ENCODE measurements at regions of chr3 and their contacts with region 1.

Region 1: DNA sequence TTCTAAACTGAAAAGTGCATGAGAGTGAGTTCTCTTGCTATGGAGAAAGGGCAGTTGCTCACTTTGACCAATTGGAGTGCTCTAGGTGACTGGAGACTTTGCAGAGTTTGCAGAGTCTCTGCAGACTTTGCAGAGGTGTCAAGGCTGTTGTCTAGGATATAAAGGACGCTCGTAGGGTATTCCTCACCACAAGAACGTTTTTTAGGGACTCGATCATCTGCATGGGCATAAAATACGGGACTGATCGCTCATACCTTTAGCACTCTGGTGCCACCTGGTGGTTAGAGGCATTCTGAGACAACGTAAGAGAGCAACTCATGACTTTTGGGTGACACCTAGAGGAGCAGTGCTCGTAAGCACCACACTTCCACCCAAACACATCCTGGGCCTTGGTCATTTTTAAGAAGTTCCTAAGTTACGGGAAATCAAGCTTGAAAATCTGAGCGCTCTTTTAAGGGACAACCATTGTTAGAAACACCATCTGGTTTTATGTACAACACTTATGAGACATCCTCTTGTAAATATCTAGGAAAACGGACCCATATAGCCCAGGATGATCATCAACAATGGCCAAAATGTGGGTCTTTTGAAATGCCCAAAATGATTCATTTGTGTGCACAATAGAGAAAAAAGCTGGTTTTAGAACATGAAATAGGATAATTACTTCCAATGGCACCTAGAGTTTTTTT is 51.6 kb upstream of the XCR1 start:
- DNase-seq: peak; percentile 85 to 88 (median 86)
- H3K4me3 ChIP-seq: no peak overlapping the region
- H3K4me3 Mint-ChIP-seq: peak overlapping the region in 4 of 8 donors; percentile 3 to 70 (median 51)
- H3K27ac ChIP-seq: no peak overlapping the region
- H3K27ac Mint-ChIP-seq: peak overlapping the region in 2 of 7 donors; percentile 15 to 16
- H3K4me1 ChIP-seq: peaks cover 3% of the 10 kb centered on the region
- H3K4me1 Mint-ChIP-seq: peaks cover 6 to 9% (median 8%) of the 10 kb centered on the region in 4 donors
- H3K27me3 ChIP-seq: no peaks in the 10 kb centered on the region
- H3K27me3 Mint-ChIP-seq: no peaks in the 10 kb centered on the region

Region 2: GRCh38 chr3:45593708-45594609 is 484.9 kb before region 1 on chr3:
- CTCF ChIA-PET with region 1: no interaction called
- POLR2A ChIA-PET with region 1: no interaction called
- intact Hi-C with region 1: loop called (anchors 1 kb)
- DNase-seq: peak; percentile 61 to 78 (median 67)
- H3K4me3 ChIP-seq: peak overlapping the region; percentile 70 to 76
- H3K4me3 Mint-ChIP-seq: peak overlapping the region; percentile 89 to 99 (median 94)
- H3K27ac ChIP-seq: peak overlapping the region; percentile 58
- H3K27ac Mint-ChIP-seq: peak overlapping the region; percentile 81 to 98 (median 90)
- H3K4me1 ChIP-seq: peaks cover 59% of the 10 kb centered on the region
- H3K4me1 Mint-ChIP-seq: peaks cover 42 to 60% (median 52%) of the 10 kb centered on the region in 4 donors
- H3K27me3 ChIP-seq: no peaks in the 10 kb centered on the region
- H3K27me3 Mint-ChIP-seq: no peaks in the 10 kb centered on the region

Region 3: GRCh38 chr3:45760878-45761711 is 317.8 kb before region 1 on chr3:
- CTCF ChIA-PET with region 1: interaction called, 65 read pairs
- POLR2A ChIA-PET with region 1: no interaction called
- intact Hi-C with region 1: loop called (anchors 1 kb)
- DNase-seq: peak in 4 of 5 donors; percentile 30 to 43 (median 34)
- H3K4me3 ChIP-seq: no peak overlapping the region
- H3K4me3 Mint-ChIP-seq: no peak overlapping the region
- H3K27ac ChIP-seq: no peak overlapping the region
- H3K27ac Mint-ChIP-seq: peak overlapping the region in 1 of 7 donors; percentile 8
- H3K4me1 ChIP-seq: no peaks in the 10 kb centered on the region
- H3K4me1 Mint-ChIP-seq: peaks cover 0 to 4% (median 3%) of the 10 kb centered on the region in 4 donors
- H3K27me3 ChIP-seq: no peaks in the 10 kb centered on the region
- H3K27me3 Mint-ChIP-seq: peaks cover 0 to 4% of the 10 kb centered on the region in 2 donors

Region 4: GRCh38 chr3:45948311-45948781 is 130.5 kb before region 1 on chr3:
- CTCF ChIA-PET with region 1: interaction called, 677 read pairs
- POLR2A ChIA-PET with region 1: interaction called, 12 read pairs
- intact Hi-C with region 1: loop called (anchors 1 kb)
- DNase-seq: no peak
- H3K4me3 ChIP-seq: no peak overlapping the region
- H3K4me3 Mint-ChIP-seq: peak overlapping the region in 5 of 8 donors; percentile 17 to 65 (median 22)
- H3K27ac ChIP-seq: no peak overlapping the region
- H3K27ac Mint-ChIP-seq: peak overlapping the region; percentile 35 to 83 (median 79)
- H3K4me1 ChIP-seq: peaks cover 87% of the 10 kb centered on the region
- H3K4me1 Mint-ChIP-seq: peaks cover 42 to 97% (median 74%) of the 10 kb centered on the region in 4 donors
- H3K27me3 ChIP-seq: no peaks in the 10 kb centered on the region
- H3K27me3 Mint-ChIP-seq: no peaks in the 10 kb centered on the region

Region 5: DNA sequence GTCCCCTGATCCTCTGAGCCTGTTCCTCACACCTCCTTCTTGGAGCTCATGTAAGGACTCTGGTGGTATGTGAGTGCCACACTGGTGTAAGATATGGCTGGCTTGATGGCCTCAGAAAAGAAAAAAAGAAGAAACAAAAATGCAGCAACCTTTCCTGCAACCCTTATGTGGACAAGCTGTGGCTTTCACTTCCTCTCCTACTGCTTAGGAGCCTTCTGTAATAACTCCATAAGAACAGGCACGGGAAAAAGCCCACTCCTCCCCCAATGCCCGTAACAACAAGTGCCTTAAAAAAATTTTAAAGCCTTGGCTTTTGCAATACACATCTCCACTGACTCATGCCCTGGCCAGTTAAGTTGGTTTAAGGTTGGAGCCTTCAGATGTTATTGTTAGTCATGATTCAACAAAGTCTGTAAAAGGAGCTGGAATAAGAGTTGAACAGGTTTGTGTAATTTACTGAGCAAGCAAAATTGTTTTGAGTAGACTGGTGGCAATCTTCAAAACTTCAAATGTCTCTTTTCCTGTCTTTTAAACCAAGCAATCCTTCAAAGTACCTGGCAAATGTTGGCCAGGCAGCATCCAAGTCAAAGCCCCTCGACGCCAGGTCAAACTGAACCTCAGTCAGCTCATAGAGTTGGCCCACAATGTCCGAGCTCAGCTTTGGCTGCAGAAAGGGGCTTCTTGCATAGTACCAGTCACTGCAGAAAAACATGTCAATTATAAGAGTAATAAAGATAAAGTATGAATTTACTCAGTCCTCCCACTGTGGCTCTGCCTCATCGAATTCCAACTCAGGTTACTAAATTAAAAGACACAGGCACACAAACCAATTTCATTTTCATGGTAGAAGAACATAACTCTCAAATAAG is 106.1 kb before region 1 on chr3:
- CTCF ChIA-PET with region 1: interaction called, 153 read pairs
- POLR2A ChIA-PET with region 1: interaction called, 3 read pairs
- intact Hi-C with region 1: no loop called
- DNase-seq: no peak
- H3K4me3 ChIP-seq: no peak overlapping the region
- H3K4me3 Mint-ChIP-seq: peak overlapping the region in 4 of 8 donors; percentile 20 to 54 (median 28)
- H3K27ac ChIP-seq: no peak overlapping the region
- H3K27ac Mint-ChIP-seq: peak overlapping the region; percentile 63 to 90 (median 75)
- H3K4me1 ChIP-seq: peaks cover 75% of the 10 kb centered on the region
- H3K4me1 Mint-ChIP-seq: peaks cover 40 to 91% (median 66%) of the 10 kb centered on the region in 4 donors
- H3K27me3 ChIP-seq: no peaks in the 10 kb centered on the region
- H3K27me3 Mint-ChIP-seq: no peaks in the 10 kb centered on the region

Region 6: DNA sequence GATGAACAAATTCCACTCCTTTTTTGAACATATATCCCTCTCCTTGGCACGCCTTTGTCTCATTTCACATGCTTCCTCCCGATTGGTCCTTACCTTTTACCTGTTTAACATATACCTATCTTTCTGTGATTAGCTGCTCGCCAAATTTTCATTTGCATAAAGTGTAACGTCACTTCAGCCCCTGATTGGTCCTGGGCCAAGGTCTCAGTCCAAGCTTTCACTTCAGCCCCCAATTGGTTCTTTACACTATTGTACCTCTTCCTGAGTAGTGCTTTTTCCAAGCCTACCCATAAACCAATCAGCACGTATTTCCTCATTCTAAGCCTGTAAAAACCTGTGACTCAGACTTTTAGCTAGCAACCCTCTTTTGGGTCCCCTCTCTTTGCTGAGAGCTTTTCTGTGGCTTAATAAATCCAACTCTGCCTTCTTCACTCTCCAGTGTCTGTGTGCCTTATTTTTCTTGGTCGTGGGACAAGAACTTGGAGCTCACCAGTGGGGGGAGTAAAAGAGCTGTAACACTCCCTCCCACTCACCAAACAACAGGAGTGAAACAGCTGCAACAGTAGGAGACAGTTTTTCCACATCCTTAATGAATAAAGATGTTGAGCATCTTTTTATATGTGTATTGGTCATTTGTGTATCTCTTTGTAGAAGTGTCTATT is 51.0 kb before region 1 on chr3:
- CTCF ChIA-PET with region 1: interaction called, 11 read pairs
- POLR2A ChIA-PET with region 1: no interaction called
- intact Hi-C with region 1: no loop called
- DNase-seq: no peak
- H3K4me3 ChIP-seq: no peak overlapping the region
- H3K4me3 Mint-ChIP-seq: no peak overlapping the region
- H3K27ac ChIP-seq: no peak overlapping the region
- H3K27ac Mint-ChIP-seq: peak overlapping the region in 1 of 7 donors; percentile 86
- H3K4me1 ChIP-seq: no peaks in the 10 kb centered on the region
- H3K4me1 Mint-ChIP-seq: peaks cover 0 to 3% (median 0%) of the 10 kb centered on the region in 4 donors
- H3K27me3 ChIP-seq: no peaks in the 10 kb centered on the region
- H3K27me3 Mint-ChIP-seq: no peaks in the 10 kb centered on the region

Region 7: DNA sequence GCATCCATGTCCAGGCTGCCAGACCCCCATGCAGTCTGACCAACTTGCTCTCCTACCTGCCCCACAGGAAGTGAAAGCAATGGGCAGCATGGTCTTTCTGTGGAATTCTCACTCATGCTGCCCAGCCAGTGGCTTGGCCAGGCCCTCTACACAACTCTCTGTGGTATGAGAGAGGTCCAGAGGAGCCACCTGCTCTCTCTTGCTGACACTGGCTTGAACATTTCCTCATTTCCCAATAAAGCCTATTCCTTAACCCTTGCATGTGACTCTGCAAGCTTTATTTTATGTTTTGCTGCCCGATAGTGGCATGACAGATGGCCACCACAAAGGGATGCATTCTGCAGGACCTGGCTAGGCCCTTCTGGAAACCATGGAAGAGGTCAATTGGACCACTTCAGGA is 75.5 kb after region 1 on chr3:
- CTCF ChIA-PET with region 1: no interaction called
- POLR2A ChIA-PET with region 1: no interaction called
- intact Hi-C with region 1: no loop called
- DNase-seq: no peak
- H3K4me3 ChIP-seq: no peak overlapping the region
- H3K4me3 Mint-ChIP-seq: no peak overlapping the region
- H3K27ac ChIP-seq: no peak overlapping the region
- H3K27ac Mint-ChIP-seq: no peak overlapping the region
- H3K4me1 ChIP-seq: peaks cover 14% of the 10 kb centered on the region
- H3K4me1 Mint-ChIP-seq: peaks cover 5 to 14% (median 12%) of the 10 kb centered on the region in 4 donors
- H3K27me3 ChIP-seq: no peaks in the 10 kb centered on the region
- H3K27me3 Mint-ChIP-seq: no peaks in the 10 kb centered on the region

Region 8: DNA sequence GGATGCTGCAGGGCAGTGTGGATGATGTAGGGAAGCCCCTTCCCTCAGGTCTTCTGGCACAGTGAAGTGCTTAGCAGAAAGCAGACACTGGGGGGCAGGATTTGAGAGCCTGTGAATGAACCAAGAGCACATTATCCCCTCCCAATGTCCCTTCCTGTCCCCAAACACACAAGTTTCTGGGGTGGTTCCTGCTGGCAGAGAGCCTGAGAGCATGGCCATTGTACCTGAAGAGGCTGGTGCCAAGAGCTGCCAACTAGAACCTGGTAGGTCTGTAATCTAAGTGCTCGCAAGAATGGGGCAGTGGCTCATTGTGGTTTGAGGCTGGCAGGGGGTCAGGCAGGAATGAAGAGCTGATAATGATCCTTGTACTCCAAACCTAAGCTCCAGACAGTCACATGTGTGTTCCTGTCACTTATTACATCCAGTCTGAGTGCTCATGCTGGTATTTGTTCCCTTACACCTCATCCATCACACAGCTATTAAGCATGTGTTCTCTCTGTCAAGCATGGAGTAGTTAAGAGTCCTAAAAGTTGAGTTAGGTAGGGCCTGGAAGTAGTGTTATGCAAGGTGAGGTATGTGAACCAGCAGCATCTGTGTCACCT is 136.0 kb after region 1 on chr3:
- CTCF ChIA-PET with region 1: interaction called, 11 read pairs
- POLR2A ChIA-PET with region 1: no interaction called
- intact Hi-C with region 1: no loop called
- DNase-seq: no peak
- H3K4me3 ChIP-seq: no peak overlapping the region
- H3K4me3 Mint-ChIP-seq: no peak overlapping the region
- H3K27ac ChIP-seq: no peak overlapping the region
- H3K27ac Mint-ChIP-seq: peak overlapping the region in 1 of 7 donors; percentile 44
- H3K4me1 ChIP-seq: peaks cover 22% of the 10 kb centered on the region
- H3K4me1 Mint-ChIP-seq: no peaks in the 10 kb centered on the region
- H3K27me3 ChIP-seq: no peaks in the 10 kb centered on the region
- H3K27me3 Mint-ChIP-seq: no peaks in the 10 kb centered on the region